ENCODE measurements at regions of chr7 and their contacts with region 1.

Region 1: GRCh38 chr7:93055543-93056107 is 62.2 kb downstream of the SAMD9 start:
- DNase-seq: no peak
- ATAC-seq: peak; percentile 74
- H3K4me3 Mint-ChIP-seq: no peak overlapping the region
- H3K27ac Mint-ChIP-seq: no peak overlapping the region
- H3K4me1 Mint-ChIP-seq: peaks cover 9% of the 10 kb centered on the region
- H3K27me3 Mint-ChIP-seq: peaks cover 13% of the 10 kb centered on the region

Region 2: DNA sequence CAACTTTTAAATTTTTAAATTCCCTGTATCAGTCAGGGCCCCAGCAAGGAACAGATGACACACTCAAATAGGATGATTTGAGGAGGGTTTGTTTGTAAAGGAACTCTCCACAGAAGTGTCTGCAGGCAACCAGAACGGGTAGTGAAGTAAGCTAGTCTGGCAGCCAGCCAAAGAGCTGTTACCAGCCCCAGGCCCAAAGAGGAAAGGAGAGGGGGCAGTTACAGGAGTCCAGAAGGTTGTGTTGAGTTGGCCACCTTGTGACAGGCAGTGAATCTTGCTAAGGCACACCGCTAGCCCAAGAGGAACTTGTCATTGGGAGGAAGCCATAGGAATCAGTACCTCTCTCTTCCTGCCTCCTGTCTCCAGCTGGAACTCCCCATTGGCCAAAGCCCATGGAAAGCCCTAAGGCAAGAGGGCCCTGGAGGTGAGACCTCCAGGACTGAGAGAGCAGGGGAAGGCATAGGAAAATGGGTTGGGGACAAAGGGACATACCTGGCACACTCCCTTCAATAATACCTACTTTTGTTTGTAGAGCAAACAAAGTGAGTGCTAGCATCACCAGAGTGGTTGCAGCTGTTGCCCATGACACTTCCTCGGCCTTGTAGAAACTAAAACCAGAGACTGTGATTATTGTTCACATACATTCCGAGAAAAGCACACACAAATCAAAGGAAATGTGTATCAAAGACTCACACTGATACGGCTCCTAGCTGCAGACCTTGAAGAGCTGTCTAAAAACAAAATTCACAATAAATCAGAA is 633.8 kb before region 1 on chr7:
- CTCF ChIA-PET with region 1: no interaction called
- POLR2A ChIA-PET with region 1: no interaction called
- intact Hi-C with region 1: loop called (anchors 2 to 10 kb)
- DNase-seq: no peak
- ATAC-seq: no peak
- H3K4me3 Mint-ChIP-seq: no peak overlapping the region
- H3K27ac Mint-ChIP-seq: no peak overlapping the region
- H3K4me1 Mint-ChIP-seq: peaks cover 10% of the 10 kb centered on the region
- H3K27me3 Mint-ChIP-seq: peaks cover 18% of the 10 kb centered on the region

Region 3: GRCh38 chr7:92621026-92621540 is 434.5 kb before region 1 on chr7:
- CTCF ChIA-PET with region 1: interaction called, 4 read pairs
- POLR2A ChIA-PET with region 1: no interaction called
- intact Hi-C with region 1: loop called (anchors 1 kb)
- DNase-seq: peak; percentile 90
- ATAC-seq: peak; percentile 78
- H3K4me3 Mint-ChIP-seq: peak overlapping the region; percentile 0
- H3K27ac Mint-ChIP-seq: peak overlapping the region; percentile 90
- H3K4me1 Mint-ChIP-seq: peaks cover 50% of the 10 kb centered on the region
- H3K27me3 Mint-ChIP-seq: no peaks in the 10 kb centered on the region

Region 4: DNA sequence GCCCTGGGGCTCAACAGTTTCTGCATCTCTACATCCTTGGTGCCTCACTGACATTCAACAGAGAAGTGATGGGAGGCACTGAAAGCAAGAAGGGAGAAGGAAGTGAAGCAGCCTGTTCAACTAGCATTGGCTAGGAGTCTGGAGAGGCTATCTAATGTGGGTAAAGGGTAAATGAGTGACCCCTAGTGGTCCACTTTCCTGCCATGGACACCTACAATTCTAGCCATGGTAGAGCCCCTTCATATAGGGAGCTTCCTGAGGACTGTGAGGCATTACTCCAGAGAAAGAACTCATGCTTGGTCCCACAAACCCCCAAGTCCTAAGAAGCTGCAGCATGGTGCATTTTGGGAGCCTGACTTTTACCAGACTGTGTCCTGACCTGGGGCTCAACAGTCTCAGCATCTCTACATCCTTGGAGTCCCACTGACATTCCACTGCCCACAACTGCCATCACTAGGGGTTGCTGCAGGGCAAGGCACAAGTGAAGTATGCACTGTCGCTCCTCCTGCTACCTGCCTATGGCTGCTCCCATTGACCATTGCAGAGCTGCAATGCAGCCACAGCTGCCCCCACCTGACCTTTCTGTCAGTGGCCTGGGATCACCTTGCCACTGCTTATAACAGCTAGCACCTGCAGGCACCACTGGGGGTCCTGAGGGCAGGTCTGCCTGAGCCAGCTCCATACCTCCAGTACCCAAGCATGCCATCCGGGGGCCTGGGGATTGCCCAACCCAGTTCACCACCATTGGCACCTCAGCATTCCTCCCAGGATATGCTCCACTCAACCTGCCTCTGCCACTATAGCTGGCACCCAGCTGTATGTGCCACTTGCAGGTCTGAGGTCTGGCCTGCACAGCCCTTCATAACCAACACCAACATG is 175.2 kb before region 1 on chr7:
- CTCF ChIA-PET with region 1: no interaction called
- POLR2A ChIA-PET with region 1: no interaction called
- intact Hi-C with region 1: loop called in 1 of 2 experiments (anchors 1 kb)
- DNase-seq: peak; percentile 26
- ATAC-seq: peak; percentile 54
- H3K4me3 Mint-ChIP-seq: no peak overlapping the region
- H3K27ac Mint-ChIP-seq: no peak overlapping the region
- H3K4me1 Mint-ChIP-seq: peaks cover 18% of the 10 kb centered on the region
- H3K27me3 Mint-ChIP-seq: peaks cover 4% of the 10 kb centered on the region

Region 5: DNA sequence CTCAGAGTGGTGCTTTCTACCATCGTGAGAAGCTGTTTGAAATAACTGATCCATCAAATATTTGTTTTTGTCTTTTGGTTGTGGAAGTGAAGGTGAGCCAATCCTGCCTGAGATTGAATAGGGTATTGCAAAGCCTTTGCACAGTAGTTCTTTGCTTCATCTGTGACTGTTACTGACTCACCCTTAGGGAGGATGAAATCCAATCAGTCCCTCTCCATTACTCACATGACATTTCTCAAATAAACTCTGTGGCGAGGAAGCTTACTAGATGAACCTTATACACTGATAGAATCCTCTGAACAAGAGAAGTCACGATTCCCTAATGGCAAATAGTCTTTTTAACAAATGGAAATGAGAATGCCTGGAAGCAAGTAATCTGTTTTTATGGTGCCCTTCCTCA is 138.8 kb after region 1 on chr7:
- CTCF ChIA-PET with region 1: no interaction called
- POLR2A ChIA-PET with region 1: no interaction called
- intact Hi-C with region 1: no loop called
- DNase-seq: no peak
- ATAC-seq: no peak
- H3K4me3 Mint-ChIP-seq: no peak overlapping the region
- H3K27ac Mint-ChIP-seq: no peak overlapping the region
- H3K4me1 Mint-ChIP-seq: no peaks in the 10 kb centered on the region
- H3K27me3 Mint-ChIP-seq: peaks cover 41% of the 10 kb centered on the region